ENCODE measurements at regions of chr5 and their contacts with region 1.

Region 1: DNA sequence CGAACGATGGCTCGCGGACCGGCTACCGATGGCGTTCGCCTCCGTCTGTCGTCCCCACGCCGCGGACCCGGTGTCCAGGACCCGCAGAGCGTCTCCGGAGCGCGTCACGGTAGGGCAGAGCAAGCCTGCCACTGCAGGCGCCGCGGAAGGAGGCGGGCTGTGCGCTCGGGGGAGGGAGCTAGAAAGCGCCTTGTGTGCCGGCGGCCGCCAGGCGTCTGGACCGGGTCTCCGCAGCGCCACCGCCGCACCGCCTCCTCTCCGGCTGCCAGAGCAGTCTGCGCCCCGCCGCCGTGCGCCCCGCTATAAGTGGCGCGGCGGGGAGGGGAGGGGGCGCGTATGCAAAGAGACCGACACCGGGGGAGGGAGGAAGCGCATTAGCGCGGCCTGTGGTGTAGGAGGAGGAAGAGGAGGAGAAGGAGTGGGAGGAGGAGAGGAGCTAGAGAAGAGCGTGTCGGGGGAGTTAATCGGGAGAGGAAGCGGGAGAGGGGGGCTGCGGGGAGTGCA is at the start of gene ENC1:
- DNase-seq: no peak
- ATAC-seq: peak; percentile 83
- H3K4me3 ChIP-seq: peak within 1 kb of the TSS; percentile 92
- H3K27ac ChIP-seq: peak within 1 kb of the TSS; percentile 55
- H3K4me1 ChIP-seq: peaks cover 9% of the 10 kb centered on the region
- H3K27me3 ChIP-seq: no peaks in the 10 kb centered on the region; a peak in 1 of 4 replicates
- CTCF ChIP-seq: peak; percentile 36 to 54 (median 42); a peak in 5 of 6 replicates
- EP300 ChIP-seq: no peak
- POLR2A ChIP-seq: peak; percentile 97
- RAD21 ChIP-seq: peak; percentile 27; the same call in 1 of the 2 replicates
- polyA plus RNA-seq, gene ENC1: 8.2 to 8.5 TPM

Region 2: GRCh38 chr5:73902327-73903051 is 738.0 kb before region 1 on chr5:
- CTCF ChIA-PET with region 1: interaction called, 65 read pairs
- POLR2A ChIA-PET with region 1: interaction called, 6 read pairs
- RAD21 ChIA-PET with region 1: interaction called, 45 read pairs
- SMC1A ChIA-PET with region 1: interaction called, 71 read pairs
- in situ Hi-C with region 1: loop called (anchors 5 kb)
- intact Hi-C with region 1: no loop called
- DNase-seq: peak; percentile 55
- ATAC-seq: peak; percentile 3; the same call in 1 of the 3 replicates
- H3K4me3 ChIP-seq: no peak overlapping the region
- H3K27ac ChIP-seq: no peak overlapping the region
- H3K4me1 ChIP-seq: peaks cover 12% of the 10 kb centered on the region
- H3K27me3 ChIP-seq: peaks cover 0 to 7% of the 10 kb centered on the region in 2 experiments; a peak in 1 of 4 replicates
- CTCF ChIP-seq: peak; percentile 33 to 72 (median 68); a peak in 5 of 6 replicates
- EP300 ChIP-seq: no peak
- POLR2A ChIP-seq: no peak
- RAD21 ChIP-seq: peak; percentile 86

Region 3: DNA sequence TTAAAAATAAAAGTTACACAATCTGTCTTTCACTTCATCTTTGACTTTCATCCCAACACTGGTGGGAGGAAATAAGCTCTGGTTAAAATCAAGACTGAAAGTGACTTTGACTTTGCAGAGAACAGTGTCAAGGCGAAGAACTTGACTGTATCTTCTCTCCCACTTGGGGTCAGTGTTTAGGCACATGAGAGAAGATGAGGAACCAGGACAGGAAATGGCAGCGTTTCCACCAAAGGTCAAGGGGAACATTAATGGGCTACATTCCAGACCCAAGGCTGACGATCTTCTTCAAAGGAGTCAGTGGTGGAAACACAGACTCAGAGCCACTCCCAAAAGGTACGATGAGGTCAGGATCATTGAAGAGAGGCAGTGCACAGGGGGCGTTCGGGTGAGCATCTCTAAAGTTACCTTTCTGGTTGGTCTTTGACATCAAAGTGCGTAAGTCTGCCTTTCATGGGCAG is 605.0 kb before region 1 on chr5:
- CTCF ChIA-PET with region 1: interaction called, 17 read pairs
- POLR2A ChIA-PET with region 1: no interaction called
- RAD21 ChIA-PET with region 1: interaction called, 9 read pairs
- SMC1A ChIA-PET with region 1: interaction called, 14 read pairs
- in situ Hi-C with region 1: loop called (anchors 5 kb)
- intact Hi-C with region 1: loop called (anchors 2 kb)
- DNase-seq: peak; percentile 59
- ATAC-seq: peak; percentile 97
- H3K4me3 ChIP-seq: no peak overlapping the region
- H3K27ac ChIP-seq: no peak overlapping the region
- H3K4me1 ChIP-seq: peaks cover 8% of the 10 kb centered on the region; the same call in 1 of the 2 replicates
- H3K27me3 ChIP-seq: no peaks in the 10 kb centered on the region
- CTCF ChIP-seq: peak; percentile 56 to 71 (median 70)
- EP300 ChIP-seq: no peak
- POLR2A ChIP-seq: no peak
- RAD21 ChIP-seq: peak; percentile 82

Region 4: DNA sequence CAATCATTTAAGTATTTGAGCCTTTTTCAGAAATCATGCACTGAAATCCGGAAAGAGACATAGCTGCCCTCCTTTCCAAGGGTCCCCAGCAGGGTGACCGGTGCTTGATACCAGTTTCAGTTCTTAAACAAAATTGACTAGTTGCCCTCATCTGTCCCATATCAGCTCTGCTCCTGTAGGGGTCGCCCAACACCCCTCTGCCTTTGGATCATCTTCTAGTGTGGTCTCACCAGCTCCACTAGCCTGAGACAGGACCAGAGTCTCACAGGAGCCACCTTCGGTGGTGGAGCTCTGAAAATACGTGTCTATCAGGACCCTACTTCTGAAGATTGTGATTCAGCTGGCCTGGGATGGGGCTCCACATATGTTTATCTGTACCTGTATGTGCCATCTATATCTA is 428.2 kb before region 1 on chr5:
- CTCF ChIA-PET with region 1: interaction called, 8 read pairs
- POLR2A ChIA-PET with region 1: no interaction called
- RAD21 ChIA-PET with region 1: interaction called, 19 read pairs
- SMC1A ChIA-PET with region 1: interaction called, 16 read pairs
- in situ Hi-C with region 1: no loop called
- intact Hi-C with region 1: no loop called
- DNase-seq: no peak
- ATAC-seq: peak; percentile 78
- H3K4me3 ChIP-seq: no peak overlapping the region
- H3K27ac ChIP-seq: no peak overlapping the region
- H3K4me1 ChIP-seq: no peaks in the 10 kb centered on the region
- H3K27me3 ChIP-seq: no peaks in the 10 kb centered on the region
- CTCF ChIP-seq: peak; percentile 36 to 53 (median 52); a peak in 5 of 6 replicates
- EP300 ChIP-seq: no peak
- POLR2A ChIP-seq: no peak
- RAD21 ChIP-seq: peak; percentile 48; the same call in 1 of the 2 replicates

Region 5: GRCh38 chr5:74326571-74327338 is 313.7 kb before region 1 on chr5:
- CTCF ChIA-PET with region 1: interaction called, 3 read pairs
- POLR2A ChIA-PET with region 1: no interaction called
- RAD21 ChIA-PET with region 1: no interaction called
- SMC1A ChIA-PET with region 1: interaction called, 10 read pairs
- in situ Hi-C with region 1: no loop called
- intact Hi-C with region 1: loop called (anchors 2 kb)
- DNase-seq: peak; percentile 92
- ATAC-seq: peak; percentile 92
- H3K4me3 ChIP-seq: no peak overlapping the region
- H3K27ac ChIP-seq: no peak overlapping the region
- H3K4me1 ChIP-seq: peaks cover 13% of the 10 kb centered on the region
- H3K27me3 ChIP-seq: no peaks in the 10 kb centered on the region
- CTCF ChIP-seq: no peak
- EP300 ChIP-seq: peak; percentile 16 to 25; a peak in 2 of 4 replicates
- POLR2A ChIP-seq: no peak
- RAD21 ChIP-seq: no peak

Region 6: DNA sequence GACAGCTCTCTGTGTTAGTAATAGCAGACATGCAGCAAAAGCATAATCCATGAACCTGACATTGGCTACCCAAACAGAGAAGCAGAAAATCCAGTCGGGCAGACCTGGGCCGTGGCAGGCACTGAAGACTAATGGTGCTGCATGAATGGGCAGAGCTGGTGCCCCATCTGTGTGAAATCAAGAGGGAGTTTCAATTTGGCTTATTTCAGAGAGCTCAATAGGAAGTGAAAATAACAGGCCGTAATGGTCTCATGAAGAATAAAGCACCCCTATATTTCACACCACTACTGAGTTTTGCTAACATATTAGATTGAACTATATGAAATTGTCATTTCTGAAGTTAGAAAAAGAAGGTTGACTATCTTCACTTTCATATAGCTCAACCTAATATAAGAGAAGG is 149.7 kb before region 1 on chr5:
- CTCF ChIA-PET with region 1: interaction called, 18 read pairs
- POLR2A ChIA-PET with region 1: interaction called, 5 read pairs
- RAD21 ChIA-PET with region 1: interaction called, 24 read pairs
- SMC1A ChIA-PET with region 1: interaction called, 40 read pairs
- in situ Hi-C with region 1: loop called (anchors 5 kb)
- intact Hi-C with region 1: loop called (anchors 2 kb)
- DNase-seq: peak; percentile 88
- ATAC-seq: peak; percentile 98
- H3K4me3 ChIP-seq: no peak overlapping the region
- H3K27ac ChIP-seq: peak overlapping the region; percentile 85
- H3K4me1 ChIP-seq: peaks cover 26% of the 10 kb centered on the region
- H3K27me3 ChIP-seq: no peaks in the 10 kb centered on the region
- CTCF ChIP-seq: no peak
- EP300 ChIP-seq: peak in 1 of 2 experiments; percentile 73; a peak in 2 of 4 replicates
- POLR2A ChIP-seq: no peak
- RAD21 ChIP-seq: peak; percentile 38; the same call in 1 of the 2 replicates

Region 7: GRCh38 chr5:74625742-74626241 is 14.7 kb before region 1 on chr5:
- CTCF ChIA-PET with region 1: interaction called, 38 read pairs
- POLR2A ChIA-PET with region 1: interaction called, 3 read pairs
- RAD21 ChIA-PET with region 1: interaction called, 34 read pairs
- SMC1A ChIA-PET with region 1: interaction called, 51 read pairs
- in situ Hi-C with region 1: no loop called
- intact Hi-C with region 1: no loop called
- DNase-seq: no peak
- ATAC-seq: no peak
- H3K4me3 ChIP-seq: no peak overlapping the region
- H3K27ac ChIP-seq: no peak overlapping the region
- H3K4me1 ChIP-seq: peaks cover 6% of the 10 kb centered on the region
- H3K27me3 ChIP-seq: no peaks in the 10 kb centered on the region
- CTCF ChIP-seq: peak in 1 of 3 experiments; percentile 5; a peak in 1 of 6 replicates
- EP300 ChIP-seq: no peak
- POLR2A ChIP-seq: no peak
- RAD21 ChIP-seq: no peak

Measured in GM12878 (cell line).